ENCODE measurements at regions of chr2 and their contacts with region 1.

Region 1: GRCh38 chr2:113080134-113080533 is 12.4 kb downstream of the IL1F10 start:
- DNase-seq: peak; percentile 31
- ATAC-seq: peak; percentile 82
- H3K4me3 Mint-ChIP-seq: no peak overlapping the region
- H3K27ac Mint-ChIP-seq: no peak overlapping the region
- H3K4me1 Mint-ChIP-seq: no peaks in the 10 kb centered on the region
- H3K27me3 Mint-ChIP-seq: peaks cover 24% of the 10 kb centered on the region
- CTCF ChIP-seq: peak; percentile 23

Region 2: GRCh38 chr2:112726497-112727190 is 353.5 kb before region 1 on chr2:
- CTCF ChIA-PET with region 1: no interaction called
- POLR2A ChIA-PET with region 1: no interaction called
- intact Hi-C with region 1: no loop called
- DNase-seq: peak; percentile 83
- ATAC-seq: peak; percentile 91
- H3K4me3 Mint-ChIP-seq: peak overlapping the region; percentile 32
- H3K27ac Mint-ChIP-seq: peak overlapping the region; percentile 66
- H3K4me1 Mint-ChIP-seq: peaks cover 20% of the 10 kb centered on the region
- H3K27me3 Mint-ChIP-seq: no peaks in the 10 kb centered on the region
- CTCF ChIP-seq: peak; percentile 75

Region 3: GRCh38 chr2:112977559-112978056 is 102.5 kb before region 1 on chr2 and contains the start of gene IL36G:
- CTCF ChIA-PET with region 1: no interaction called
- POLR2A ChIA-PET with region 1: no interaction called
- intact Hi-C with region 1: no loop called
- DNase-seq: no peak
- ATAC-seq: no peak
- H3K4me3 Mint-ChIP-seq: no peak within 1 kb of the TSS
- H3K27ac Mint-ChIP-seq: no peak within 1 kb of the TSS
- H3K4me1 Mint-ChIP-seq: peaks cover 3% of the 10 kb centered on the region
- H3K27me3 Mint-ChIP-seq: peaks cover 13% of the 10 kb centered on the region
- CTCF ChIP-seq: no peak
- total RNA-seq, gene IL36G: not detected in 2 replicates

Region 4: GRCh38 chr2:113124181-113124961 is 44.2 kb after region 1 on chr2:
- CTCF ChIA-PET with region 1: no interaction called
- POLR2A ChIA-PET with region 1: no interaction called
- intact Hi-C with region 1: loop called (anchors 5 kb)
- DNase-seq: no peak
- ATAC-seq: peak; percentile 66
- H3K4me3 Mint-ChIP-seq: peak overlapping the region; percentile 25
- H3K27ac Mint-ChIP-seq: peak overlapping the region; percentile 14
- H3K4me1 Mint-ChIP-seq: peaks cover 26% of the 10 kb centered on the region
- H3K27me3 Mint-ChIP-seq: no peaks in the 10 kb centered on the region
- CTCF ChIP-seq: no peak

Region 5: DNA sequence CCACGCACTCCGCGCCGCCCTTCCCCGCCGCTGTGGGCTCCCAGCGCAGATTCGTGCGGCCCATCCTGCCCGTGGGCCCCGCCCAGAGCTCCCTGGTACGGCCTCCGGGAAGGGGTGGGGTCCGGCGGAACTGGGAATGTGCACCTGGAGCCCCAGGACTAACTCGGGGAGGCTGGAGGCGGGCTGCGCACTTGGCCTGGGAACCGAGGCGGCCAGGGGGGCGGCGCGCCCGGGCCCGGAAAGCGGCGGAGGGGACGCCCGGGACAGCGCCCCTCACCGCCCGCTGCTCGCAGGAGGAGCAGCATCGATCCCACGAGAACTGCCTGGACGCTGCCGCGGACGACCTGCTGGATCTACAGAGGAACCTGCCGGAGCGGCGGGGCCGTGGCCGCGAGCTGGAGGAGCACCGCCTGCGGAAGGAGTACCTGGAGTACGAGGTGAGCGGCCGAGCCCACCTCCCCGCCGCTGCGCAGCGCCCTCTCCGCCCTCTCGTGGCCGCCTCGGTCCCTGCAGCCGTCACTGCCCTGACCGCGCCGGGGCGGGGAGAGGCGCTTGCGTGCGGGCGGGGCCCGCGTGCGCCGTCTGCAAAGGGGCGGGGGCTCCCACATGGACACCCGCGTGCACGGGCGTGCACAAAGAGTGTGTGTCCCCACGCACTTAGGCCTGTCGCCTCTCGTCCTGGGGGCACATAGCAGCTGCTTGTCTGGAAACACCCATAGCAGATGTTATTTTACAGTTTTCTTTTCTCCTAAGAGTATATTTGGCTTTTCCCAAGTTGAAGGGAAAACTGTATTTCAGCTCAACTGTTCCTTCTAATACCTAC is 118.9 kb after region 1 on chr2:
- CTCF ChIA-PET with region 1: interaction called, 32 read pairs
- POLR2A ChIA-PET with region 1: no interaction called
- intact Hi-C with region 1: loop called (anchors 1 kb)
- DNase-seq: peak; percentile 87
- ATAC-seq: peak; percentile 91
- H3K4me3 Mint-ChIP-seq: peak overlapping the region; percentile 76
- H3K27ac Mint-ChIP-seq: no peak overlapping the region
- H3K4me1 Mint-ChIP-seq: peaks cover 7% of the 10 kb centered on the region
- H3K27me3 Mint-ChIP-seq: no peaks in the 10 kb centered on the region
- CTCF ChIP-seq: peak; percentile 44

Measured in activated B cell treated with CpG ODN at 0.5 μM for 24 hours (primary cell).